ENCODE measurements at regions of chr3 and their contacts with region 1.

Region 1: GRCh38 chr3:45995236-45996192 is at the start of gene FYCO1:
- DNase-seq: peak; percentile 84 to 88 (median 85)
- H3K4me3 ChIP-seq: peak within 1 kb of the TSS; percentile 75 to 93
- H3K4me3 Mint-ChIP-seq: peak within 1 kb of the TSS; percentile 83 to 95 (median 92)
- H3K27ac ChIP-seq: peak within 1 kb of the TSS; percentile 95
- H3K27ac Mint-ChIP-seq: peak within 1 kb of the TSS; percentile 88 to 95 (median 94)
- H3K4me1 ChIP-seq: peaks cover 47% of the 10 kb centered on the region
- H3K4me1 Mint-ChIP-seq: peaks cover 32 to 59% (median 37%) of the 10 kb centered on the region in 4 donors
- H3K27me3 ChIP-seq: no peaks in the 10 kb centered on the region
- H3K27me3 Mint-ChIP-seq: no peaks in the 10 kb centered on the region
- total RNA-seq, gene FYCO1: 42.5 to 43.3 TPM

Region 2: DNA sequence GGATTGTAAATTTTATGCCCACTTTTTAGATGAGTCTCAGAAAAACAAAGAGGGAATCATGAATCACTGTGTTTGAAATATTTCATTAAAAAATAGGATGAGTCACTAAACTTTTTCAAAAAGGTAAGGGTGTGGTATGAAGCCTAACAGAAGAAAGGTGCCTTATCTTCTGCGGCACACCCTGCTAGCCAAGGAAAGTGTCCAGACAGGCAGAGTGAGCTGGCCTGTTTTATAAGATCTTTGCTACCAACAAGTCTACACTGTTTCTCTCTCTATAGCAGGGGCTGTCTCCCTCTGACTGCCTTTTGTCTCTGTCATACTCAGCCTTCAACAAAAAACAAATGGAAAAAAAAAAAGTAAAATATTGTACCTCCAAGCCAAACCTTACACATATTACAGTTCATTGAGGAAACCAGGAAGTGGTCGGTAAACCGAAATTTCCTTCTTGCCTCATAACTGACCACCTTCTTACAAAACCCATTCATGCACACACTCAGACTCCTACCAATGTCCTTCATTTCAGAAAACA is 1028.7 kb before region 1 on chr3:
- CTCF ChIA-PET with region 1: no interaction called
- POLR2A ChIA-PET with region 1: no interaction called
- intact Hi-C with region 1: no loop called
- DNase-seq: no peak
- H3K4me3 ChIP-seq: no peak overlapping the region
- H3K4me3 Mint-ChIP-seq: no peak overlapping the region
- H3K27ac ChIP-seq: no peak overlapping the region
- H3K27ac Mint-ChIP-seq: peak overlapping the region in 2 of 7 donors; percentile 26 to 47
- H3K4me1 ChIP-seq: peaks cover 33% of the 10 kb centered on the region
- H3K4me1 Mint-ChIP-seq: peaks cover 43 to 92% (median 57%) of the 10 kb centered on the region in 4 donors
- H3K27me3 ChIP-seq: no peaks in the 10 kb centered on the region
- H3K27me3 Mint-ChIP-seq: no peaks in the 10 kb centered on the region

Region 3: GRCh38 chr3:45409921-45410320 is 585.6 kb before region 1 on chr3:
- CTCF ChIA-PET with region 1: no interaction called
- POLR2A ChIA-PET with region 1: no interaction called
- intact Hi-C with region 1: no loop called
- DNase-seq: no peak
- H3K4me3 ChIP-seq: no peak overlapping the region
- H3K4me3 Mint-ChIP-seq: no peak overlapping the region
- H3K27ac ChIP-seq: no peak overlapping the region
- H3K27ac Mint-ChIP-seq: no peak overlapping the region
- H3K4me1 ChIP-seq: no peaks in the 10 kb centered on the region
- H3K4me1 Mint-ChIP-seq: peaks cover 0 to 4% (median under 1%) of the 10 kb centered on the region in 4 donors
- H3K27me3 ChIP-seq: no peaks in the 10 kb centered on the region
- H3K27me3 Mint-ChIP-seq: no peaks in the 10 kb centered on the region

Region 4: GRCh38 chr3:45765266-45765851 is 230.2 kb before region 1 on chr3:
- CTCF ChIA-PET with region 1: no interaction called
- POLR2A ChIA-PET with region 1: no interaction called
- intact Hi-C with region 1: no loop called
- DNase-seq: no peak
- H3K4me3 ChIP-seq: no peak overlapping the region
- H3K4me3 Mint-ChIP-seq: no peak overlapping the region
- H3K27ac ChIP-seq: no peak overlapping the region
- H3K27ac Mint-ChIP-seq: no peak overlapping the region
- H3K4me1 ChIP-seq: no peaks in the 10 kb centered on the region
- H3K4me1 Mint-ChIP-seq: peaks cover 0 to 4% (median 3%) of the 10 kb centered on the region in 4 donors
- H3K27me3 ChIP-seq: no peaks in the 10 kb centered on the region
- H3K27me3 Mint-ChIP-seq: peaks cover 3 to 4% of the 10 kb centered on the region in 2 donors

Region 5: GRCh38 chr3:45948311-45948781 is 47.2 kb before region 1 on chr3:
- CTCF ChIA-PET with region 1: interaction called, 7 read pairs
- POLR2A ChIA-PET with region 1: interaction called, 195 read pairs
- intact Hi-C with region 1: loop called (anchors 2 kb)
- DNase-seq: no peak
- H3K4me3 ChIP-seq: no peak overlapping the region
- H3K4me3 Mint-ChIP-seq: peak overlapping the region in 5 of 8 donors; percentile 17 to 65 (median 22)
- H3K27ac ChIP-seq: no peak overlapping the region
- H3K27ac Mint-ChIP-seq: peak overlapping the region; percentile 35 to 83 (median 79)
- H3K4me1 ChIP-seq: peaks cover 87% of the 10 kb centered on the region
- H3K4me1 Mint-ChIP-seq: peaks cover 42 to 97% (median 74%) of the 10 kb centered on the region in 4 donors
- H3K27me3 ChIP-seq: no peaks in the 10 kb centered on the region
- H3K27me3 Mint-ChIP-seq: no peaks in the 10 kb centered on the region

Region 6: GRCh38 chr3:45972534-45973402 is 22.7 kb before region 1 on chr3:
- CTCF ChIA-PET with region 1: interaction called, 13 read pairs
- POLR2A ChIA-PET with region 1: interaction called, 90 read pairs
- intact Hi-C with region 1: loop called (anchors 1 kb)
- DNase-seq: no peak
- H3K4me3 ChIP-seq: no peak overlapping the region
- H3K4me3 Mint-ChIP-seq: peak overlapping the region in 4 of 8 donors; percentile 20 to 54 (median 28)
- H3K27ac ChIP-seq: no peak overlapping the region
- H3K27ac Mint-ChIP-seq: peak overlapping the region; percentile 63 to 90 (median 75)
- H3K4me1 ChIP-seq: peaks cover 75% of the 10 kb centered on the region
- H3K4me1 Mint-ChIP-seq: peaks cover 40 to 91% (median 66%) of the 10 kb centered on the region in 4 donors
- H3K27me3 ChIP-seq: no peaks in the 10 kb centered on the region
- H3K27me3 Mint-ChIP-seq: no peaks in the 10 kb centered on the region

Region 7: GRCh38 chr3:46049116-46049515 is 53.6 kb after region 1 on chr3:
- CTCF ChIA-PET with region 1: interaction called, 3 read pairs
- POLR2A ChIA-PET with region 1: interaction called, 8 read pairs
- intact Hi-C with region 1: loop called (anchors 5 kb)
- DNase-seq: no peak
- H3K4me3 ChIP-seq: no peak overlapping the region
- H3K4me3 Mint-ChIP-seq: no peak overlapping the region
- H3K27ac ChIP-seq: no peak overlapping the region
- H3K27ac Mint-ChIP-seq: peak overlapping the region in 1 of 7 donors; percentile 47
- H3K4me1 ChIP-seq: peaks cover 23% of the 10 kb centered on the region
- H3K4me1 Mint-ChIP-seq: peaks cover 23 to 48% (median 30%) of the 10 kb centered on the region in 4 donors
- H3K27me3 ChIP-seq: no peaks in the 10 kb centered on the region
- H3K27me3 Mint-ChIP-seq: no peaks in the 10 kb centered on the region

Region 8: DNA sequence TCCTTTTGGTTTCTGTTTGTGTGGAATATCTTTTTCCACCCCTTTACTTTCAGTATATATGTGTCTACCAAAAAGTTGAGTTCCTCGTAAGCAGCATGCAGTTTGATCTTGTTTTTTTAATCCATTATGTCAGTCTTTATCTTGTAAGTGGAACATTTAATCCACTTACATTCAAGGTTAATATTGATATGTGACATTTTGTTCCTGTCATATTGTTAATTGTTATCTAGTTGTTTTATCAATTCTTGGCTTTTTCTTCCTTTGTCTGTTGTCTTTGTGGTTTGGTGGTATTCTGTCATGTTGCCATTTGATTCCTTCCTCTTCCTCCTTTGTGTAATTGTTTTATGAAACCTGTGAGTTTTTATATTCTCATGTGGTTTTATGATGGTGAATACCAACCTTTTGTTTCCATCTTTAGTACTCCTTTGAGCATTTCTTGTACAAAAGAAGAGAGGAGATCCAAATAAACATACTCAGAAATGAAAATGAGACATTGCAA is 75.1 kb after region 1 on chr3:
- CTCF ChIA-PET with region 1: interaction called, 50 read pairs
- POLR2A ChIA-PET with region 1: interaction called, 66 read pairs
- intact Hi-C with region 1: loop called (anchors 1 kb)
- DNase-seq: peak in 4 of 5 donors; percentile 47 to 56 (median 49)
- H3K4me3 ChIP-seq: no peak overlapping the region
- H3K4me3 Mint-ChIP-seq: peak overlapping the region in 6 of 8 donors; percentile 19 to 65 (median 51)
- H3K27ac ChIP-seq: peak overlapping the region; percentile 13
- H3K27ac Mint-ChIP-seq: peak overlapping the region; percentile 15 to 91 (median 73)
- H3K4me1 ChIP-seq: peaks cover 62% of the 10 kb centered on the region
- H3K4me1 Mint-ChIP-seq: peaks cover 52 to 68% (median 58%) of the 10 kb centered on the region in 4 donors
- H3K27me3 ChIP-seq: no peaks in the 10 kb centered on the region
- H3K27me3 Mint-ChIP-seq: no peaks in the 10 kb centered on the region

Region 9: GRCh38 chr3:46276502-46277099 is 281.1 kb after region 1 on chr3:
- CTCF ChIA-PET with region 1: no interaction called
- POLR2A ChIA-PET with region 1: no interaction called
- intact Hi-C with region 1: no loop called
- DNase-seq: peak; percentile 69 to 81 (median 73)
- H3K4me3 ChIP-seq: no peak overlapping the region
- H3K4me3 Mint-ChIP-seq: peak overlapping the region in 6 of 8 donors; percentile 3 to 81 (median 34)
- H3K27ac ChIP-seq: no peak overlapping the region
- H3K27ac Mint-ChIP-seq: peak overlapping the region; percentile 4 to 96 (median 81)
- H3K4me1 ChIP-seq: peaks cover 46% of the 10 kb centered on the region
- H3K4me1 Mint-ChIP-seq: peaks cover 29 to 53% (median 38%) of the 10 kb centered on the region in 4 donors
- H3K27me3 ChIP-seq: no peaks in the 10 kb centered on the region
- H3K27me3 Mint-ChIP-seq: peaks cover 0 to 1% of the 10 kb centered on the region in 2 donors

Measured in CD4-positive, alpha-beta memory T cell (primary cell).